ENCODE measurements at regions of chr9 and their contacts with region 1.

Region 1: DNA sequence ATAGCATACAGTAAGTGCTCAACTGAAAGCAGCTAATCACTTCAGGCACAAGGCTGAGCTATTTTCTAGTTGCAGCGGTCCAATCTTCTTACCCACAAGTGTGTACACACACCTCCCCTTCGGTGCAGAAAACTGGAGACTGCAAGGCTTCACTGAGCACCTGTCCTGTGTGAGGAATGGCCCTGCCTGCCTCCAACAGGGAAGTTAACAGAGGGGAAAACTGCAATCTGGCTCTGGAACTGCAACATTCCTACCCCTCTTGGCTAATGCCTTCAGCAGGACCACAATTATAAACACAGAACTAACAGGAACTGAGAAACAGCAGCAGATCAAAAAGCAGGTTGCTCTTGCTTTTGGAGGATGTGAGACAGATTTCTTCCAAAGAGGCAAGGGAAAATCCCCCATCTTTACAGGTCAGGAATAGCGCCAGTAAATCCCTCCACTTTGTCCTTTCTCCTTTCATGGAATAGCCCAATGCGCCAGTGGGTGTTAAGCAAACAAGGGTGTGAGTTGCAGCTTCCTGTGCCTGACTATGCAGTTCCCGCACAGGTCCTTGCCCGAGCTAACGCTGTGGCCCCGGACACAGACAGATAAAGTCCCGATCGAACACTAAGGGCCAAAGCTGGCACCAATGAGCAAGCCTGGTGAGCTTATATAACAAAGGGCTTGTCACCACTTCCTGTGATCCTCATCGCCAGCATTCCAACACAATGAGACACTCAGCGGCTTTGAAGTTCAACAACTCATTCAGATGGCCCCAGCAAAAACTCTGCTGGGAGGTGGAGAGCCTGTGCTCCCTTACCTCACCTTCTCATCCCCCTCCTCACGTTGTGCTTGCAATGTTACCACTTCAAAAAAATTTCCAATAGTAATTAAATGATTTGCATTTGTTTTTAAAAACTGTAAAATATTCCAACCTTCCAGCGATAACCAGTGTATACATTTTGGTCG is 21.5 kb downstream of the SHB start:
- DNase-seq: no peak
- CTCF ChIP-seq: no peak

Region 2: DNA sequence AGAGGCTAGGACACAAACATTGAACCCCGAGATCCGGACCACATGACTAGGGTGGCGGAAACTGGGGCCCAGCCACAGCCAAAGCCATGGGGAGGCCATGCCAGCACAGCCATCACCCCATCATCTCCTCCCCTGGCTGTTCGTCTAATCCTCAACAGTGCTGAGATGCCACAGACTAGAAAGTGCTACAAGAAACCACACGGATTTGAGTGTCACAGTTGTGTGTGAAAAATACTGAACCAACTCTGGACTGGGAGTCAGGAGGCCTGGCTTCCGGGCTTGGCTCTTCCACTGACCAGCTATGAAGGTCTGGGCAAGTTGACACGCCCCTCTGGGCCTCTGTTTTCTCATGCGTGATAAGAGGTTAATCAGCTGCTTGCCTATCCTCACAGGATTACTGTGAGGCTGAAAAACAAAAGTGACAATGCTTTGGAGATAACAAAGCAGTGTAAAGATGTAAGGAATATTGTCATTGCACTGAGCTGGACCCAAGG is 60.3 kb after region 1 on chr9:
- in situ Hi-C with region 1: loop called (anchors 10 kb)
- DNase-seq: no peak
- CTCF ChIP-seq: no peak